ENCODE measurements at regions of chr10 and their contacts with region 1.

Region 1: DNA sequence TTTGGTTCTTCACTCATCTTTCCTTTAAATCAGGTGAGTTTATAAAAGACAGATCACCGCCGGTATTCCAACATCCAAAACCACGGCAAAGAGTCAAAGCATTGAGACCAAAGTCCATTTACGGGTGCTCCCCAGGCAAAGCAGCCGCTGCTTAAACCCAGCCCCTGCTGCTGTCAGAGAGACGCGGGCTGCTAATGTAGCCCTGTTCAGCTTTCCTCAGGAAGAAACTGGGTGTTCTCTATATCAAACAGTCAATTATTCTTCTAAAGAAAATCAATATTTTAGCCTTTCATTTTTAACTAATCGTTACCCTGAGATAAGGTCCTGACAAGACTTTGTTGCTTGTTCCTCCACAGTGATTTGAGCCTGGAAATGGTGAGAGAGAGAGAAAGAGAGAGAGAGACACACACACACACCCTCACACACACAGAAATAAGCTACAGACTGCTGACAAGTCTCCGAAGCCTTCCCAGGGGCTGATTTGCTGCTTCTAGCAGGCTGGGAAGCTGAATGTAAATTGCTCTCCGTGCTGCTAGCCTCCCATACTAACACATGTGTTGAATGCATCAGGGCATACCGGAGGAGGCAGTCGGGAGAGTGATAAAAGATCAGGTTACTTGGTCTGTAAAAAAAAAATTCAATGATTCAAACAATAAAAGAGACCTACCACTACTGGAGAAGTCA is 183.0 kb upstream of the ANK3 start:
- DNase-seq: peak; percentile 14
- H3K4me3 Mint-ChIP-seq: peak overlapping the region; percentile 91
- H3K27ac Mint-ChIP-seq: peak overlapping the region; percentile 85
- H3K4me1 Mint-ChIP-seq: peaks cover 43% of the 10 kb centered on the region
- H3K27me3 Mint-ChIP-seq: no peaks in the 10 kb centered on the region

Region 2: GRCh38 chr10:60513281-60513680 is 59.4 kb before region 1 on chr10:
- intact Hi-C with region 1: no loop called
- DNase-seq: no peak
- H3K4me3 Mint-ChIP-seq: no peak overlapping the region
- H3K27ac Mint-ChIP-seq: no peak overlapping the region
- H3K4me1 Mint-ChIP-seq: peaks cover 2% of the 10 kb centered on the region
- H3K27me3 Mint-ChIP-seq: no peaks in the 10 kb centered on the region

Region 3: GRCh38 chr10:60536529-60537114 is 36.0 kb before region 1 on chr10:
- intact Hi-C with region 1: loop called (anchors 1 kb)
- DNase-seq: no peak
- H3K4me3 Mint-ChIP-seq: no peak overlapping the region
- H3K27ac Mint-ChIP-seq: peak overlapping the region; percentile 17
- H3K4me1 Mint-ChIP-seq: peaks cover 37% of the 10 kb centered on the region
- H3K27me3 Mint-ChIP-seq: no peaks in the 10 kb centered on the region

Region 4: GRCh38 chr10:60549686-60550085 is 23.0 kb before region 1 on chr10:
- intact Hi-C with region 1: no loop called
- DNase-seq: no peak
- H3K4me3 Mint-ChIP-seq: no peak overlapping the region
- H3K27ac Mint-ChIP-seq: no peak overlapping the region
- H3K4me1 Mint-ChIP-seq: no peaks in the 10 kb centered on the region
- H3K27me3 Mint-ChIP-seq: no peaks in the 10 kb centered on the region

Region 5: GRCh38 chr10:60597513-60597912 is 24.9 kb after region 1 on chr10:
- intact Hi-C with region 1: loop called (anchors 2 kb)
- DNase-seq: no peak
- H3K4me3 Mint-ChIP-seq: no peak overlapping the region
- H3K27ac Mint-ChIP-seq: no peak overlapping the region
- H3K4me1 Mint-ChIP-seq: peaks cover 22% of the 10 kb centered on the region
- H3K27me3 Mint-ChIP-seq: no peaks in the 10 kb centered on the region

Region 6: DNA sequence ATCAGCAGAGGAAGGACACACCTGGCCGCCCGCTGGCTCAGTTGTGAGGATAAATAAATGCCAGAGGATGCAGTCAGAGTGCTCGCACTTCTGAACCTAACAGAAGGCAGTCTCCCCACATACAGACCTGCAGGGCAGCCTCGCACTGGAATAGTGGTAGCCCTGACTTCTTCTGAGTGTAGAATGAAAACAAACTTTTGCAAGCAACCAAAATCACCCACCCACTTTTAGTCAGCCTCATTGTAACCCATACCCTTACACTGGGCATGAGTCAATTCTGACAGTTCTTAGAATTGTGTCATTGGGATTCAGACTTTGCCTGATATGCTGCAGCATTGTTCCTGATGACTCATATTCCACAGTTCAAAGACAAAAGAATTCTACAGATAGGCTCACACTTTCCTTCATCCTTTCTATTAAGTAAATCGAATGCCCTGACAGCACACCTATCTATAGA is 38.7 kb after region 1 on chr10:
- intact Hi-C with region 1: loop called (anchors 1 kb)
- DNase-seq: no peak
- H3K4me3 Mint-ChIP-seq: no peak overlapping the region
- H3K27ac Mint-ChIP-seq: no peak overlapping the region
- H3K4me1 Mint-ChIP-seq: peaks cover 16% of the 10 kb centered on the region
- H3K27me3 Mint-ChIP-seq: no peaks in the 10 kb centered on the region

Region 7: GRCh38 chr10:60728056-60728455 is 155.4 kb after region 1 on chr10:
- intact Hi-C with region 1: loop called (anchors 1 kb)
- DNase-seq: no peak
- H3K4me3 Mint-ChIP-seq: peak overlapping the region; percentile 28
- H3K27ac Mint-ChIP-seq: peak overlapping the region; percentile 36
- H3K4me1 Mint-ChIP-seq: peaks cover 55% of the 10 kb centered on the region
- H3K27me3 Mint-ChIP-seq: peaks cover 3% of the 10 kb centered on the region

Region 8: GRCh38 chr10:60757420-60757895 is 184.8 kb after region 1 on chr10:
- intact Hi-C with region 1: no loop called
- DNase-seq: no peak
- H3K4me3 Mint-ChIP-seq: no peak overlapping the region
- H3K27ac Mint-ChIP-seq: no peak overlapping the region
- H3K4me1 Mint-ChIP-seq: peaks cover 2% of the 10 kb centered on the region
- H3K27me3 Mint-ChIP-seq: peaks cover 21% of the 10 kb centered on the region

Region 9: GRCh38 chr10:60778214-60779029 is 205.8 kb after region 1 on chr10 and contains the start of gene CDK1:
- intact Hi-C with region 1: loop called (anchors 1 kb)
- DNase-seq: peak; percentile 98
- H3K4me3 Mint-ChIP-seq: peak within 1 kb of the TSS; percentile 100
- H3K27ac Mint-ChIP-seq: peak within 1 kb of the TSS; percentile 98
- H3K4me1 Mint-ChIP-seq: peaks cover 38% of the 10 kb centered on the region
- H3K27me3 Mint-ChIP-seq: no peaks in the 10 kb centered on the region
- total RNA-seq, gene CDK1: 89.1 and 91.4 TPM in 2 replicates